HEK293 (cell line): ENCODE measurements at regions of chr16 and their contacts with region 1.

Region 1: GRCh38 chr16:23327820-23328219 is 25.7 kb downstream of the SCNN1B start:
- H3K4me3 ChIP-seq: no peak overlapping the region
- H3K27ac ChIP-seq: no peak overlapping the region
- H3K4me1 ChIP-seq: no peaks in the 10 kb centered on the region
- CTCF ChIP-seq: no peak

Region 2: GRCh38 chr16:23339787-23340186 is 12.0 kb after region 1 on chr16:
- CTCF ChIA-PET with region 1: interaction called, 10 read pairs
- POLR2A ChIA-PET with region 1: no interaction called
- H3K4me3 ChIP-seq: no peak overlapping the region
- H3K27ac ChIP-seq: no peak overlapping the region
- H3K4me1 ChIP-seq: no peaks in the 10 kb centered on the region
- CTCF ChIP-seq: no peak